Heart right ventricle (tissue), 16 donors: ENCODE measurements at regions of chr6 and their contacts with region 1.

Region 1: GRCh38 chr6:76779068-76779467 is 684.2 kb downstream of the HTR1B start:
- DNase-seq: no peak
- ATAC-seq: no peak
- H3K4me3 ChIP-seq: no peak overlapping the region
- H3K27ac ChIP-seq: no peak overlapping the region
- H3K4me1 ChIP-seq: peaks cover 0 to 12% (median 0%) of the 10 kb centered on the region in 9 donors
- H3K27me3 ChIP-seq: no peaks in the 10 kb centered on the region
- CTCF ChIP-seq: no peak

Region 2: DNA sequence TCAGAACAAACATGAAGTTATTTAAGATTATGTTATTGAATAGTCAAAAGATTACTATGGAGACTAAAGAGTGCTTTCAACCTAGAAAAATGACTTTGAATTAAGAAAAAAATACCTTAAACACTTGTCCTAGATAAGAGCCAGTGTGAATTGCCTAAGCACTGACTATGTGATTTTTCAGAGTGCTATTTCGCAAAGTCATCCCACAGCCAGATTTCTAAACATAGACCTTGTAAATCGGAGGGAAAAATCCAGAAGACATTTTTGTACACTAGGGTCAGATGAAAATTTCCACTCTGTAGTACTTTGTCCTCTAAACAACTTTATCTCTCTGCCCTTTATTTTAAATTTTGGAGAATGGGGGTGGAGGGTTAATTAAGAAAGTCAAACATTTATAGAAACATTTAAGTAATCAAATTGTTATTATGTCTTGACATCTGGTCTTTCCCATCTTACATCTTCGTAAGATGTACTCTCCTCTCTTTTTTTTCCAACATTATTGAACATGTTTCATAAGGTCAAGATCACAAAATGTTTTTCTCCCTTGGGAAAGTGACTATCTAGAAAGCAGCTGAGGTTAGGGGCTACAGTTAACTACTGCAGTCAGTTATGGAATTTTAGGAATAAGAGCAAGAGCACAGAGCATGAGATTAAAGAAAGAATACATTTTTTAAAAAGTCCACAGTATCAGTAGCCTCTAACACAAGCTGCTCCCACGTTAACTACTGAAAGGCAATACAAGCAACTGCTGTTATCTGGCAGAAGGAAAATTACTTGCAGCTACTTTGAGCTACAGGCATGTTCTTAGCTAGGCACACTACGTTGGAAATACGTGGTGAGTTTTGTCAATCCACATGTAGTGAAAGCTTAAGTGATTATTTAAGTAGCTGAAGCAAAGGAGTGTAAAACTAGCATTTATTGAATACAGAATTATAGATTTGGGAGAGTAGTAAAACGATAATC is 35.7 kb after region 1 on chr6:
- intact Hi-C with region 1: loop called in 1 of 10 experiments (anchors 1 kb)
- DNase-seq: no peak
- ATAC-seq: peak in 6 of 8 donors; percentile 46 to 75 (median 63)
- H3K4me3 ChIP-seq: no peak overlapping the region
- H3K27ac ChIP-seq: peak overlapping the region in 1 of 10 donors; percentile 25
- H3K4me1 ChIP-seq: peaks cover 0 to 14% (median 0%) of the 10 kb centered on the region in 9 donors
- H3K27me3 ChIP-seq: no peaks in the 10 kb centered on the region
- CTCF ChIP-seq: no peak